ENCODE measurements at regions of chr1 and their contacts with region 1.

Region 1: GRCh38 chr1:159798893-159799292 is 3.3 kb upstream of the FCRL6 start:
- DNase-seq: peak; percentile 95
- H3K4me3 Mint-ChIP-seq: no peak overlapping the region
- H3K27ac Mint-ChIP-seq: no peak overlapping the region
- H3K4me1 Mint-ChIP-seq: no peaks in the 10 kb centered on the region
- H3K27me3 Mint-ChIP-seq: no peaks in the 10 kb centered on the region
- CTCF ChIP-seq: peak; percentile 83

Region 2: GRCh38 chr1:159678939-159679338 is 120.0 kb before region 1 on chr1:
- CTCF ChIA-PET with region 1: no interaction called
- POLR2A ChIA-PET with region 1: no interaction called
- intact Hi-C with region 1: no loop called
- DNase-seq: no peak
- H3K4me3 Mint-ChIP-seq: no peak overlapping the region
- H3K27ac Mint-ChIP-seq: no peak overlapping the region
- H3K4me1 Mint-ChIP-seq: peaks cover 8% of the 10 kb centered on the region
- H3K27me3 Mint-ChIP-seq: no peaks in the 10 kb centered on the region
- CTCF ChIP-seq: no peak

Region 3: DNA sequence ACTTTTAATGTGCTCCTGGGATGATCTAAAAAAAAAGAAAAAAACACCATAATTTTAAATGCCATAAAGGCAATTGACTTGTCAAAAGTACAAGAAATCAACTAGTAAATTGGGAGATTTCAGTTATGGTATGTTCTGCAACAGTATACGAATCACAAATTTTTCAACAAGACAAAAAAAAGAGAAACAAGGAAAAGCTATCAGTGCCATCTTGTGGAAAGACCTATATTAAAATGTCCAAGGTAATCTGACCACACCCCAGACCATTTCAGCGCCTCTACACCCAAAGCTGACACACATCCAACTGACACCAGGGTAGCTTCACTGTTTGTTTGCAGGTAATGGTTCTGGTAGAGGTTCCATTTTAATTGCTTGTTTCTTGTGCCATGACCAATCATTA is 23.2 kb before region 1 on chr1:
- CTCF ChIA-PET with region 1: interaction called, 72 read pairs
- POLR2A ChIA-PET with region 1: interaction called, 14 read pairs
- intact Hi-C with region 1: loop called (anchors 1 kb)
- DNase-seq: peak; percentile 81
- H3K4me3 Mint-ChIP-seq: no peak overlapping the region
- H3K27ac Mint-ChIP-seq: peak overlapping the region; percentile 89
- H3K4me1 Mint-ChIP-seq: peaks cover 68% of the 10 kb centered on the region
- H3K27me3 Mint-ChIP-seq: no peaks in the 10 kb centered on the region
- CTCF ChIP-seq: peak; percentile 63

Region 4: DNA sequence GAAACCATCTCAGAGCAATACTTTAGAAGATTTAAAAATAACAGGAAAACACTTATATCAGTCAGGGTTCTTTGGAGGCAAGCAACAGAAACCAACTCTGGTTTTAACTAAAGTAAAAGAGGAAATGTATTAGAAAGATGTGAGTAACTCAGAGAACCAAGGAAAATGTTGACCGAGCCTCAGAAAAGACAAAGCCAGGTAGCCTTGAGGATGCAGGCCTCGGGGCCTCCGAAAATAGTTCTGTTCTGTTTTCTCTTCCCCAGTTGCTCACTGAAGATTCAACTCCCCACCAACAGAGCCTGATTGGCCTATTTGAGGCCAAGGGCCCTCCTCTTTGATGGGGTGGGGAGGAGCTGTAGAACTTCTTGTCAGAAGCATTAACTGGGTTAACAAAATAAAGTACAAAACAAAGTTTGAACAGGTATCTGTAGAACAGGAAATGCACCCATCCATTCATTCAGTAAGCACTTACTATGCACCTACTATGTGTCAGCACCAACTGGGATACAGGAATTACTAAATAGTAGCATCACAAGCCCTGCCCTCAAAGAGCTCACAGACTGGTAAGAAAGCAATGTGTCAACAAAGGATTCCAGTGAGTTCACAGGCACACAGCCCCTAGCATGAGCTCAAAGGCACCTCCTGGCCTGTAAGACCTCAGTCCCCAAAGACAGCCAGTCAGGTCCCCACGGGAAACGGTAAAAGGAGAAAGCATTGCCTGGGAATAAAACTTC is 40.4 kb after region 1 on chr1:
- CTCF ChIA-PET with region 1: interaction called, 36 read pairs
- POLR2A ChIA-PET with region 1: interaction called, 4 read pairs
- intact Hi-C with region 1: no loop called
- DNase-seq: no peak
- H3K4me3 Mint-ChIP-seq: no peak overlapping the region
- H3K27ac Mint-ChIP-seq: no peak overlapping the region
- H3K4me1 Mint-ChIP-seq: peaks cover 10% of the 10 kb centered on the region
- H3K27me3 Mint-ChIP-seq: no peaks in the 10 kb centered on the region
- CTCF ChIP-seq: no peak

Region 5: DNA sequence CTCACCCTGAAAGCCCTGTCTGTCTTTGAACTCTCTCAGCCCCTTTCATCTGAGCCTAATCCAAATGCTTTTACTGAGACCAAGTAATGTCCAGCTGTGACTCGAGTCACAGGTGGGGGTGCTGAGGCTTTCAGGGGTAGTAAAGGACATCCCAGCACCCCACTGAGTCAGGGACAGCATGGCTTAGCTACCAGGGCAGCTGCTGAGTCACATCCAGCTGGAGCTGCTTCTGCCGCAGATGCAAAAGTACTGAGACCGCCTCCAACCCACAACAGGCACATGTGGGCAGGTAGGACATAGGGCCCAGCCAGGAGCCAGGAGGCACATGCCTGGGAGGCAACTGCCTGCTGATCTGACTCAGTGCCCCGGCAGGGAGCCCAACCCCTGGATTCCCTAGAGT is 70.3 kb after region 1 on chr1:
- CTCF ChIA-PET with region 1: interaction called, 35 read pairs
- POLR2A ChIA-PET with region 1: interaction called, 3 read pairs
- intact Hi-C with region 1: no loop called
- DNase-seq: peak; percentile 84
- H3K4me3 Mint-ChIP-seq: peak overlapping the region; percentile 22
- H3K27ac Mint-ChIP-seq: peak overlapping the region; percentile 85
- H3K4me1 Mint-ChIP-seq: peaks cover 51% of the 10 kb centered on the region
- H3K27me3 Mint-ChIP-seq: no peaks in the 10 kb centered on the region
- CTCF ChIP-seq: no peak

Region 6: GRCh38 chr1:159916184-159917051 is 117.5 kb after region 1 on chr1:
- CTCF ChIA-PET with region 1: interaction called, 31 read pairs
- POLR2A ChIA-PET with region 1: no interaction called
- intact Hi-C with region 1: no loop called
- DNase-seq: peak; percentile 67
- H3K4me3 Mint-ChIP-seq: no peak overlapping the region
- H3K27ac Mint-ChIP-seq: peak overlapping the region; percentile 39
- H3K4me1 Mint-ChIP-seq: peaks cover 62% of the 10 kb centered on the region
- H3K27me3 Mint-ChIP-seq: no peaks in the 10 kb centered on the region
- CTCF ChIP-seq: no peak

Region 7: DNA sequence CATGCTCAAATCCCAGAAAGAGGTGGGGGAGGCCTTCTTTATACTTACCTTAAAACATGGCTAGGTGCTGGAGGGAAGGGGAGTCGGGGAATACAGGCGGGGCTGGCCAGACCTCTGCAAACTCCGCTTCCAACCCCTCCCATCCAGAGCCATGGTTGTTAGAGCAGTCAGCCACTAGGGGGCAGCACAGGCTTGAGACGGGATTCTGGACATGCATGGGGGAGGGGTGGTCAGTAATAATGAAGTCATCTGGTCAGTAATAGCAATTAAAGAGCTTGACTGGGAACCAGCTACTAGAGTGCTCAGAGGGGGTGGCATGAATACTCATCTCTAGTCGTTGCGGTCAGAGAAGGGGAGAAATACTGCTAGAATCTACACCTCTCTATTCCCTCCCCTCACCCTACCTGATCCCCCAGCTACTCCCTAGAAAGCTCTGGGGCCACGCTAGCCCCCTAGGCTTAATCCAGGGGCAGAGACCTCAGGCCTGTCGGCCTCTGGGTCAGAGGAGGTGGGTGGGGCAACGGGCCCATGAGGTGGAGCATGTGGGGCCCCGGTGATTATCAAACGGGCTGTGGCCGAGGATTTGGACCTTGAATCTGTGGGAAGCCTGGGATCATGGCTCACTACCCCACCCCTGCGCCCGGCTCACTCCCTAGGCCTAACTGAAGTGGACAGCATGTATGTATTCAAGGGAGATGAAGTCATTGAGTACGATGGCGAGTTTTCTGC is 394.4 kb after region 1 on chr1:
- CTCF ChIA-PET with region 1: no interaction called
- POLR2A ChIA-PET with region 1: no interaction called
- intact Hi-C with region 1: no loop called
- DNase-seq: peak; percentile 94
- H3K4me3 Mint-ChIP-seq: no peak overlapping the region
- H3K27ac Mint-ChIP-seq: no peak overlapping the region
- H3K4me1 Mint-ChIP-seq: no peaks in the 10 kb centered on the region
- H3K27me3 Mint-ChIP-seq: no peaks in the 10 kb centered on the region
- CTCF ChIP-seq: peak; percentile 100

Region 8: DNA sequence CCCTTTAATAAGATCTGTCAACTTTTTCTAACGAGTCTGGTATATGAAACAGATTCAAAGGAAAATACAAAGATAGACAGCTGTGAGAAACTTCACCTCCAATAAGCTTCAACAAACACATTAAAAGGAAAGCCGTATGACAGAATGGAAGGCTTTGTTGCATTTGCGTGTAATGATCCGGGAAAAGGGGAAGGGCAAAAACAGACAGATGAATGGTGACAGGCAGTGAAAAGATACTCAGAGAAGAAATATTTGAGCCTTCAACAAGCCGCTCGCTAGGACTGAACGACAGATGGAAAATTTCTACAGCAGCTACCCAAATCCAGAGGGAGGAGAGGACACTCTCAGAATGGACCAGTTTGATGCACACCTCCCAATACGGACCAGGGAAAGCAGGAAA is 529.3 kb after region 1 on chr1:
- CTCF ChIA-PET with region 1: no interaction called
- POLR2A ChIA-PET with region 1: no interaction called
- intact Hi-C with region 1: no loop called
- DNase-seq: no peak
- H3K4me3 Mint-ChIP-seq: no peak overlapping the region
- H3K27ac Mint-ChIP-seq: no peak overlapping the region
- H3K4me1 Mint-ChIP-seq: no peaks in the 10 kb centered on the region
- H3K27me3 Mint-ChIP-seq: no peaks in the 10 kb centered on the region
- CTCF ChIP-seq: no peak

Measured in MCF 10A (cell line).